ENCODE measurements at regions of chr19 and their contacts with region 1.

Region 1: DNA sequence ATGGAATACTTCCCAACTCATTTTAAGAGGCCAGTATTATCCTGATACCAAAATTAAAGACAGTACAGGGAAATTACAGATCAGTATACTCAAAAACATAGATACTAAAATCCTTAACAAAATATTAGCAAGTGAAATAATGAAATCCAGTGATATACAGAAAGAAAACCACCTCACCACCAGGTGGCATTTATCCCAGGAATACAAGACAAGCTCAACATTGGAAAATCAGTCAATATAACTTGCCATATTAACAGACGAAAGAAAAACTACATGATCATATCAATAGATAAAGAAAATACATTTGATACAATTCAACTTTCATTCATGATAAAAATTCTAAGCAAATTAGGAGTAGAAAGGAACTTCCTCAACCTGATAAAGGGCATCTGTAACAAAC is 6.7 kb upstream of the GNA15 start:
- DNase-seq: peak; percentile 24
- H3K4me3 Mint-ChIP-seq: no peak overlapping the region
- H3K27ac Mint-ChIP-seq: no peak overlapping the region
- H3K4me1 Mint-ChIP-seq: no peaks in the 10 kb centered on the region
- H3K27me3 Mint-ChIP-seq: no peaks in the 10 kb centered on the region
- CTCF ChIP-seq: no peak

Region 2: GRCh38 chr19:3163230-3163886 is 34.2 kb after region 1 on chr19:
- CTCF ChIA-PET with region 1: interaction called, 9 read pairs
- intact Hi-C with region 1: loop called (anchors 1 kb)
- DNase-seq: peak; percentile 62
- H3K4me3 Mint-ChIP-seq: no peak overlapping the region
- H3K27ac Mint-ChIP-seq: no peak overlapping the region
- H3K4me1 Mint-ChIP-seq: no peaks in the 10 kb centered on the region
- H3K27me3 Mint-ChIP-seq: no peaks in the 10 kb centered on the region
- CTCF ChIP-seq: peak; percentile 79